Transverse colon (tissue), 4 donors: ENCODE measurements at regions of chr16 and their contacts with region 1.

Region 1: DNA sequence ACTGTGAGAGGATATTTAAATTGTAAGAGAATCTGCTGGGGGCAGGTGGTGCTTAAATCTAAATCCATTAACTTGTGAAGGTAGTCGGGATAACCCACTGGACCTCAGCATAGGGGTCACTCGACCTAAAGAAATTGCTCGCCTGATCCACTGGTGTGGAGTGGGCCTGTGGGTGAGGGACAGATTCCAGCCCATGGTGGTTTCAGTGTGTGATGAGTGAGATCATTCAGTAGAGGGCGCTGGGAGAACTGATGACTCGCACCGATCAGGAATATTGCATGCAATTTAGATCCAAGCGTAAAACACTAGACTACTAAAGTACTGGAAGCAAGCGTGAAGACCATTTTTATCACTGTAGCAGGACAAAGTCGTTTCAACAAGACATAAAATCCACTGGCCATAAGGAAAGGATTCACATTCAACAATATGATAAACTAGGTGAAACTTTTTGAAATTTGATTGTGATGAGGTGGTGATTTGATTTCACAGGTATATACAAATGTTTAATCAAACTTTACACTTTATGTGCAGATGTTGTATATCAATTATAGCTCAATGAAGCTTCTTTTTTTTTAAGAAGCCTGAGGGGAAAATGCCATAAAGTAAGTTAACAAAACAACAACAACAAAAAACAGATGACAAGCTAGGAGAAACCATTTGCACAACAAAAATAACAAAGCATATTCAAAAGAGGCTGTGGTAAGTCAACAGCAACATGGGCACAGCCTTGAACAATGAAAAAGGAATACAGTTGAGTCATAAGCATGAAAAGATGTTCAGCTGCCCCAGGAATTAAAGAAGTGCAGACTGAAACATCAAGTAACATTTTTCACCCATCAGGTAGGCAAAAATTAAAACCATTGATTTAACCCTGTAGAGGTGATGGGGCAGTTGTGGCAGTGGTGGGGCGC is 7.5 kb upstream of the TMEM170A start:
- DNase-seq: peak; percentile 61
- H3K4me3 ChIP-seq: no peak overlapping the region
- H3K27ac ChIP-seq: no peak overlapping the region
- H3K4me1 ChIP-seq: peaks cover 0 to 4% (median 0%) of the 10 kb centered on the region in 4 donors
- H3K27me3 ChIP-seq: no peaks in the 10 kb centered on the region
- CTCF ChIP-seq: peak; percentile 68 to 83 (median 71)
- EP300 ChIP-seq: no peak
- POLR2A ChIP-seq: no peak

Region 2: GRCh38 chr16:75519881-75520280 is 47.9 kb after region 1 on chr16:
- in situ Hi-C with region 1: no loop called
- intact Hi-C with region 1: loop called (anchors 5 kb)
- DNase-seq: no peak
- H3K4me3 ChIP-seq: no peak overlapping the region
- H3K27ac ChIP-seq: no peak overlapping the region
- H3K4me1 ChIP-seq: peaks cover 0 to 8% (median 6%) of the 10 kb centered on the region in 4 donors
- H3K27me3 ChIP-seq: no peaks in the 10 kb centered on the region
- CTCF ChIP-seq: no peak
- EP300 ChIP-seq: no peak
- POLR2A ChIP-seq: no peak

Region 3: GRCh38 chr16:75653922-75654321 is 181.9 kb after region 1 on chr16:
- in situ Hi-C with region 1: loop called in 2 of 4 experiments (anchors 25 kb)
- intact Hi-C with region 1: loop called (anchors 10 kb)
- DNase-seq: no peak
- H3K4me3 ChIP-seq: no peak overlapping the region
- H3K27ac ChIP-seq: no peak overlapping the region
- H3K4me1 ChIP-seq: peaks cover 16 to 43% (median 24%) of the 10 kb centered on the region in 4 donors
- H3K27me3 ChIP-seq: no peaks in the 10 kb centered on the region
- CTCF ChIP-seq: no peak
- EP300 ChIP-seq: no peak
- POLR2A ChIP-seq: no peak